ENCODE measurements at regions of chr1 and their contacts with region 1.

Region 1: DNA sequence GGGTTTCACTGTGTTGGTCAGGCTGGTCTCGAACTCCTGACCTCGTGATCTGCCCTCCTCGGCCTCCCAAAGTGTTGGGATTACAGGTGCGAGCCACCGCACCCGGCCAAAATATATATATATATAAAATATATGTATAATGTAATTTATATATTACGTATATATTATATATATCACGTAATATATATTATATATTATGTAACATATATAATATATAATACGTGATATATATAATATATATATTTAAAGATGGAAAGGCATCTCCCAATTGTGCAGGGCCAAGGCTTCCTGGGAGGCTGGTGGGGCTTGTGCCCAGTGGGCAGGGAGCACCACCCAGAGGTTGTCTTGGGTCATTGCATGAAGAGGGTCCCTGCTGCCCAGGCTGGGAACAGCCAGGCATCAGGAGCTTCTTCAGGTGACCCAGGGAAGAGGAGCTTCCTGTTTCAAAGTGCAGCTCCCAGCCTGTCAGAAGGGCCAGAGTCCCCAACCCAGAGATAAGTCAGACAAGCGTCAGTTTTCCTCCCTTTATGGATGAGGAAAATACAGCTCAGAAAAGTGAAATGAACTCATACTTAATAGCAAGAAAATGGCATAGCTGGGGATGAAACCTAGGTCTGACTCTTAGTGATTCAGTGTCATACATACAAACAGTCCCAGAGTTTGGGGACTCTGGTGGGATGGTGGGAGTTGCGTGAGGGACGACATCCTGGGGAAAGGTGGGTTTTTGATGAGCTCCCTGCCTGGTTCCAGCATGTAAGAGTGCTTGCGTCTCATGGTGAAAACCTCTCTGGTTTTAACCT is 12.0 kb downstream of the UBE2Q1 start:
- DNase-seq: peak; percentile 71 to 81 (median 79)
- ATAC-seq: peak; percentile 94
- H3K4me3 ChIP-seq: no peak overlapping the region
- H3K27ac ChIP-seq: no peak overlapping the region
- H3K4me1 ChIP-seq: no peaks in the 10 kb centered on the region; a peak in 2 of 5 replicates
- H3K27me3 ChIP-seq: peaks cover 17 to 34% of the 10 kb centered on the region in 2 experiments
- CTCF ChIP-seq: peak; percentile 82 to 93 (median 88)
- EP300 ChIP-seq: no peak
- POLR2A ChIP-seq: no peak
- RAD21 ChIP-seq: peak; percentile 91 to 95

Region 2: DNA sequence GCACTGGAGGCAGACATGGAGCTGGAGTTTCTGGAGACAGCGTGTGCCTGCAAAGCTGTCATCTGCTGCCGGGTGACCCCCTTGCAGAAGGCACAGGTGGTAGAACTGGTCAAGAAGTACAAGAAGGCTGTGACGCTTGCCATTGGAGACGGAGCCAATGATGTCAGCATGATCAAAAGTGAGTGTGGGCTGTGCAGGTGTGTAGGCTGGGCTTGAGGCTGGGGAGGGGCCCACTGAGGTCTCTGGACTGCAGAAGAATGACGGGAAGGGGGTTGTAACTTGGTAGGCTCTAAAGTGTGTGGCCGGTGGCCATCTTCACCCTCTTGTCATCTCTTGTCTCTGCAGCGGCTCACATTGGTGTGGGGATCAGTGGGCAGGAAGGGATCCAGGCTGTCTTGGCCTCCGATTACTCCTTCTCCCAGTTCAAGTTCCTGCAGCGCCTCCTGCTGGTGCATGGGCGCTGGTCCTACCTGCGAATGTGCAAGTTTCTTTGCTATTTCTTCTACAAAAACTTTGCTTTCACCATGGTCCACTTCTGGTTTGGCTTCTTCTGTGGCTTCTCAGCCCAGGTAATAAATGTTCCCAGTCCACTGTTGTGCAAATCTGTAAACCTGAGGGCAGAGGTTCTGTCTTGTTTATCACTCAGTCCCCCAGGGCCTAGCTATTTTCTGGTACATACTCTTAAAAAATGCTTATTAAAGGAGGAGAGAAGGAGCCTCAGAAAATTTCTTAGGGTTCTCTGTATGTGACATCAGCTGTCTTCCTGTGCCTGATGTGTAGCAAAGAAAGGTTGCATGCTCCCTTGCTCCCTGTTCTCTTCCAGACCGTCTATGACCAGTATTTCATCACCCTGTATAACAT is 201.3 kb before region 1 on chr1:
- CTCF ChIA-PET with region 1: interaction called, 4 read pairs
- POLR2A ChIA-PET with region 1: no interaction called
- in situ Hi-C with region 1: loop called (anchors 5 kb)
- intact Hi-C with region 1: loop called (anchors 2 kb)
- DNase-seq: peak; percentile 61 to 86 (median 66)
- ATAC-seq: peak; percentile 82
- H3K4me3 ChIP-seq: no peak overlapping the region
- H3K27ac ChIP-seq: no peak overlapping the region
- H3K4me1 ChIP-seq: peaks cover 0 to 15% of the 10 kb centered on the region in 2 experiments; a peak in 3 of 5 replicates
- H3K27me3 ChIP-seq: no peaks in the 10 kb centered on the region
- CTCF ChIP-seq: peak; percentile 78 to 91 (median 90)
- EP300 ChIP-seq: no peak
- POLR2A ChIP-seq: no peak
- RAD21 ChIP-seq: peak; percentile 65 to 79

Region 3: DNA sequence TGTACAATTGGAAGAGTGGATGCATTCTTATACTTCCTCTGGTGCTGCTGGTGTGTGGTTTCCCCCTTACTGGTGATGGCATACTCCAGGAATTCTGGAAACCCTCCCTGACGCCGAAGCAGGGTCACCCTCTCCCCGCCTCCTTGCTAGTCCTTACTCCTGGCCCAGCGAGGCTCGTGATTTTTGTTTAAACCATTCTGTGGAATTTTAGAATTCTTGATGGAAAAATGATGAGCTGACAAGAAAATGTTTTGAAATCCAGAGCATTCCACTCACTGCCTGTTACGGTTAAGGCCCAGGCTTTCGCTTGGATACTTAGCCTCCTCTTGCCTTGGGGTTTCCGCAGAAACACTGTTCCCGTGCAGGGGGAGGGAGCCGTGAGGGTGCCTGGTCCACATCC is 100.2 kb before region 1 on chr1:
- CTCF ChIA-PET with region 1: no interaction called
- POLR2A ChIA-PET with region 1: no interaction called
- in situ Hi-C with region 1: no loop called
- intact Hi-C with region 1: no loop called
- DNase-seq: no peak
- ATAC-seq: no peak
- H3K4me3 ChIP-seq: no peak overlapping the region
- H3K27ac ChIP-seq: no peak overlapping the region
- H3K4me1 ChIP-seq: peaks cover 5 to 7% of the 10 kb centered on the region in 2 experiments; a peak in 4 of 5 replicates
- H3K27me3 ChIP-seq: peaks cover 22 to 57% of the 10 kb centered on the region in 2 experiments
- CTCF ChIP-seq: no peak
- EP300 ChIP-seq: no peak
- POLR2A ChIP-seq: no peak
- RAD21 ChIP-seq: no peak